Esophagus muscularis mucosa (tissue), 4 donors: ENCODE measurements at regions of chr20 and their contacts with region 1.

Region 1: GRCh38 chr20:49219089-49219923 is at the start of gene DDX27:
- DNase-seq: peak; percentile 100
- H3K4me3 ChIP-seq: peak within 1 kb of the TSS; percentile 67 to 79 (median 72)
- H3K27ac ChIP-seq: peak within 1 kb of the TSS; percentile 84 to 91 (median 88)
- H3K4me1 ChIP-seq: peaks cover 13 to 33% (median 26%) of the 10 kb centered on the region in 4 donors
- H3K27me3 ChIP-seq: no peaks in the 10 kb centered on the region
- CTCF ChIP-seq: peak in 1 of 3 experiments; percentile 19
- EP300 ChIP-seq: peak; percentile 13
- POLR2A ChIP-seq: peak; percentile 61
- total RNA-seq, gene DDX27: 25.7 to 35.0 (median 30.2) TPM

Region 2: GRCh38 chr20:49054056-49054643 is 165.2 kb before region 1 on chr20:
- intact Hi-C with region 1: no loop called
- DNase-seq: no peak
- H3K4me3 ChIP-seq: no peak overlapping the region
- H3K27ac ChIP-seq: no peak overlapping the region
- H3K4me1 ChIP-seq: peaks cover 8 to 44% (median 14%) of the 10 kb centered on the region in 4 donors
- H3K27me3 ChIP-seq: no peaks in the 10 kb centered on the region
- CTCF ChIP-seq: no peak
- EP300 ChIP-seq: no peak
- POLR2A ChIP-seq: no peak

Region 3: GRCh38 chr20:49132995-49133478 is 86.3 kb before region 1 on chr20:
- intact Hi-C with region 1: loop called (anchors 1 kb)
- DNase-seq: no peak
- H3K4me3 ChIP-seq: no peak overlapping the region
- H3K27ac ChIP-seq: peak overlapping the region in 2 of 4 donors; percentile 24 to 59
- H3K4me1 ChIP-seq: peaks cover 0 to 11% (median 10%) of the 10 kb centered on the region in 4 donors
- H3K27me3 ChIP-seq: no peaks in the 10 kb centered on the region
- CTCF ChIP-seq: peak; percentile 55 to 68 (median 60)
- EP300 ChIP-seq: no peak
- POLR2A ChIP-seq: no peak

Region 4: DNA sequence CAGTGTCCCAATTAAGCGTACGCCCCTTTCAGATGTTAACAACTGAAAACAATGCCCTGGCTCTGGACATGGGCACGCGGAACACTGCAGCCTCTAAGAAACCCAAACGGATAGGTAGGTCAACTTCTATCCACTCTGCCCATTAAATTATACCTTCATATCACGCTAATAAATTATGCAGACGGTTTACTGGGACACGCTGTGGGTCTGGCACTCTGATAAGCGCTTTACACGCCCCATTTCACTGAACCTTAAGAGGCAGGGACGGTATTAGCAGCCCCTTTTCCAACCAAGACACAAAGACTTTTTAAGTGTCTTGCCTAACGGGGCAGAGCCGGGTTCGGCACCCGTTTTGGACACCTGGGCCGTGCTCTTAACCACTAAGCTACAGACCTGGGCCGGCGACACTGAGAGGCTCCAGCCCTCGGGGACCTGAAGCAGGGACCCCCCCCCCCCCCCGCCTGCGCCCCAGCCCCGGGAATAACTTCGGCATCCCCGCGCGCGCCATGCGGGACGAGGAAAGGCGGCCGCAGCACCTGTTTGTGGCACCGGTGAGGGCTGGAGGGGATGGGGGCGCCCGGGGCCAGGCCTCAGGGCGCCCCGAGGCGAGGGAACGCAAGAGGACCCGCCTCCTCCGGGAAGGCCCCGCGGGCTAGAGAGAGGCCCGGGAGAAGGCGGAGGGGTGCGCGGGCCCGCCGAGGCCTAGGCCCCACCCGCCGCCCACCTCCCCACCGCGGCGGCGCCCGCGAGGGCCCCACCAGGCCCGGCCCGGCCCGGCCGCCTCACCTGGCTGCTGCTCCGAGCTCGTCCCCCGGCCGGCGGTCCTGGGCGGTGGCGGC is 31.8 kb before region 1 on chr20:
- intact Hi-C with region 1: loop called (anchors 2 kb)
- DNase-seq: no peak
- H3K4me3 ChIP-seq: peak overlapping the region; percentile 74 to 96 (median 90)
- H3K27ac ChIP-seq: peak overlapping the region; percentile 92 to 98 (median 96)
- H3K4me1 ChIP-seq: peaks cover 16 to 47% (median 43%) of the 10 kb centered on the region in 4 donors
- H3K27me3 ChIP-seq: no peaks in the 10 kb centered on the region
- CTCF ChIP-seq: no peak
- EP300 ChIP-seq: no peak
- POLR2A ChIP-seq: no peak